Breast epithelium (tissue), 4 donors: ENCODE measurements at regions of chr5 and their contacts with region 1.

Region 1: DNA sequence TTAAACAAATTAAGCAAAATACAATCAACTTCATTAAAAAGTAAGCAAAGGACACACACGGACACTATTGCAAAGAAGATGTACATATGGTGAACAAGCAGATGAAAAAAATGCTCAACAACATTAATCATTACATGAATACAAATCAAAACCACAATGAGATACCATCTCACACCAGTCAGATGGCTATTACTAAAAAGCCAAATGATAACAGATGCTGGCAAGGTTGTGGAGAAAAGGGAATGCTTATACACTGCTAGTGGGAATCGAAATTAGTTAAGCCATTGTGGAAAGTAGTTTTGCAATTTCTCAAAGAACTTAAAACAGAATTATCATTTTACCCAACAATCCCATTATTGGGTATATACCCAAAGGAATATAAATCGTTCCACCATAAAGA is 636.2 kb upstream of the ST8SIA4 start:
- DNase-seq: no peak
- H3K4me3 ChIP-seq: no peak overlapping the region
- H3K27ac ChIP-seq: no peak overlapping the region
- H3K4me1 ChIP-seq: no peaks in the 10 kb centered on the region
- H3K27me3 ChIP-seq: no peaks in the 10 kb centered on the region
- CTCF ChIP-seq: no peak
- POLR2A ChIP-seq: no peak

Region 2: DNA sequence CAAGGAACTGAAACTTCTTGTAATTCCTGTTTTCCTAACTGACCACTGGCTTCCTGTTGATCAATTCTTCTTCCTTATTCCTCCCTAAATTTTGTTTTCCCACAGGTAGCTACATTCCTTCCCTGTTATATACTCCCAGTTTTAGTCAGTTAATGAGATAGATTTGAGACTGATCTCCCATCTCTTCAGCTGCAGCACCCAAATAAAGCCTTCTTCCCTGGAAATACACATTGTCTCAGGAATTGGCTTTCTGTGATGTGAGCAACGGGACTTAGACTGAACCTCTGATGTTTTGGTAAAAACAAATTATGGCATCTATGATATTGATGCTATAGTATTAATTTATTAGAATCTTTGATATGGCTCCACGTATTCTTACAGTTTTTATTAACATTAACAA is 18.9 kb before region 1 on chr5:
- intact Hi-C with region 1: loop called (anchors 2 kb)
- DNase-seq: no peak
- H3K4me3 ChIP-seq: no peak overlapping the region
- H3K27ac ChIP-seq: no peak overlapping the region
- H3K4me1 ChIP-seq: no peaks in the 10 kb centered on the region
- H3K27me3 ChIP-seq: no peaks in the 10 kb centered on the region
- CTCF ChIP-seq: no peak
- POLR2A ChIP-seq: no peak

Region 3: DNA sequence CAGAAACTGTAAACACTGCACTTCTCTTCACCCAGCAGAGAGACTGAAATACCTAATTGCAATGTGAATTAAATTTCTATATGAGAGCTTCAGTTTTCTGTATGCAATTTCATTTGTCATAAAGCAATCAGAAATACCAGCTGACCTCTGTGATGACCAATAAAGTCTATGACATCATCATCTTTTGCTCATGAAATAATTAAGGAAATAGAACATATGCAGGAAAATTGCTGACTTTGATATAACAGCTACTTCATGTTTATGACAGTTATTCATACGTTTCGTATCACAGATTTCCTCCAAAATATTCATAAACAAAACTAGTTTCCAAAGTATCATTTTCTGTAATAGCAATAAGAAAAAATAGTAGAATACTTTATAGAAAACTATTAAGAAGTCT is 104.5 kb after region 1 on chr5:
- intact Hi-C with region 1: no loop called
- DNase-seq: no peak
- H3K4me3 ChIP-seq: no peak overlapping the region
- H3K27ac ChIP-seq: no peak overlapping the region
- H3K4me1 ChIP-seq: no peaks in the 10 kb centered on the region
- H3K27me3 ChIP-seq: no peaks in the 10 kb centered on the region
- CTCF ChIP-seq: no peak
- POLR2A ChIP-seq: no peak